Activated naive CD4-positive, alpha-beta T cell treated with anti-CD3 and anti-CD28 coated beads for 36 hours (primary cell): ENCODE measurements at regions of chr1 and their contacts with region 1.

Region 1: GRCh38 chr1:31938174-31938950 is at the start of gene PTP4A2:
- DNase-seq: peak; percentile 87
- H3K4me3 Mint-ChIP-seq: peak within 1 kb of the TSS; percentile 99
- H3K27ac Mint-ChIP-seq: peak within 1 kb of the TSS; percentile 99
- H3K4me1 Mint-ChIP-seq: peaks cover 68% of the 10 kb centered on the region
- H3K27me3 Mint-ChIP-seq: no peaks in the 10 kb centered on the region
- total RNA-seq, gene PTP4A2: 240 to 263 TPM

Region 2: GRCh38 chr1:30756545-30757195 is 1181.7 kb before region 1 on chr1:
- CTCF ChIA-PET with region 1: no interaction called
- intact Hi-C with region 1: loop called (anchors 5 kb)
- DNase-seq: peak; percentile 91
- H3K4me3 Mint-ChIP-seq: peak overlapping the region; percentile 98
- H3K27ac Mint-ChIP-seq: peak overlapping the region; percentile 100
- H3K4me1 Mint-ChIP-seq: peaks cover 76% of the 10 kb centered on the region
- H3K27me3 Mint-ChIP-seq: no peaks in the 10 kb centered on the region

Region 3: DNA sequence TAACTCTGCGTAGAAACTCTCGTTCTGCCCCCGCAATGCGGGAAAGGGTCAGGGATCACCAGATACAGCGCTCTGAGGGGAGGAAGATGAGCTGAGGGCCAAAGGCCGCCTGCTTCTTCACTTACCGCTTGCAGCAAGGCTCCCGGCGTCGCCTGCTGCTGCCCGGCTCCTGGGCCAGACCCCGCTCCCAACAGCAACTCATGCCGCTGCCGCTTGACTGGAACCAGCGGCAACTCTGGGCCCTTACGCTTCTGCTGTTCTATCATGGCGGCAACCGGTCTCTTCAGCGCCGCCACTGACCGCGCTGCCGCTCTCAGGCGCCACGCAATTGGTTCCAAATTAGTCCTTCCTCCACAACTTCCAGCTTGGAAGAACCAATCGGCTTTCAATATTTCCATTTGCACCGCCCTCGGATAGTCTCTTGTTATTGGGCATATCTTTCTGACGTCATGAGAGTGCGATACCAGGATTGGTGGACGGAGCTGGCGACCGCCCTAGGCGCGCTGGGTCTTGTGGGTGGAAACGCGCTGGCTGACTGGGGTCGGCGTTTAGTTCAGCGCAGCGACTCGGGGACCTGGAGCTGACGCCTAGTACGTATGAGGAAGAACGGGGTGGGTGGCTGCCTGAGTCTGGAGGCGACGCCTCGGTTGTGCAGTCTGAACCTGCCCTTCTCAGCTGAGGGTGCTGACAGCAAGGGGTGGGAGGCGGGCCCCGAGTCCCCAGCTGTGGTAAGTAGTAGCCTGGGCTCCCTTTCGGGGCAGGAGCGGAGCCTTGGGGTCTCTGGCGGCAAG is 641.7 kb before region 1 on chr1 and contains the starts of genes SNRNP40 and ZCCHC17:
- CTCF ChIA-PET with region 1: no interaction called
- intact Hi-C with region 1: loop called (anchors 10 kb)
- DNase-seq: peak; percentile 97
- H3K4me3 Mint-ChIP-seq: no peak within 1 kb of the TSS
- H3K27ac Mint-ChIP-seq: no peak within 1 kb of the TSS
- H3K4me1 Mint-ChIP-seq: peaks cover 36% of the 10 kb centered on the region
- H3K27me3 Mint-ChIP-seq: no peaks in the 10 kb centered on the region
- total RNA-seq, gene SNRNP40: 101 to 106 TPM
- total RNA-seq, gene ZCCHC17: 20.8 to 21.2 TPM

Region 4: DNA sequence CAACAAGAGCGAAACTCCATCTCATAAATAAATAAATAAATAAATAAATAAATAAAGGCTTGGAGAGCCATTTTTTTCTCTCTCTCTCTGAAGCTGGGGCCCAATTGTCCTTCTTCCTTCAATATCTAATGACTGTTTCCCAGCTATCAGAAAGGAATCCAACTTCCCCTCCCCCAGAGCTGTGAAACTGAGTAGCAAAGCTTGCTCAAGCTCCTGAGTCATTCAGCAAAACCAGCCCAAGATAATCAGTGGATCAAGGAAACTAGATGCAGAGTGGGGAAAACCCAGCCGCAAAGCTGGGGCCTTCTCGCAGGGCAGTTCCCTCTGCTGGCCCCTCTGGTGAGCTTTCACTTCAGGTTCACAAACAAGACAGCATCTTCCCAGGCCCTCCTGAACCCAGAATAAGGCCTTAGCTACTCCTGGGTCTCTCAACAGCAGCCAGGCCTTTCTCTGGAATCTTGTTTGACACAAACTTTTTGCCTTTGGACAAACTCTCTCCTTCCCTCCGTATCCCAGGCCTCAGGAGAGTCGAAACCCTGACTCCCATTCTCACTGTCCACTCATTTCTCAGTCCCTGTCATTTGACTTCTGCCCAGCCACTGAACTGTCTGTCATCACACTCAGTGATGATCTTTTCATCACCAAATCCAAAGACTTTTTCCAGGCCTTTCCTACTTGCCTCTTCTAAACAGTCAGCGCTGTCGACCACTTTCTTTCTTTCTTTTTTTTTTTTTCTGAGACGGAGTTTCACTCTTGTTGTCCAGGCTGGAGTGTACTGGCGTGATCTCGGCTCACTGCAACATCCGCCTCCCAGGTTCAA is 17.8 kb after region 1 on chr1:
- CTCF ChIA-PET with region 1: interaction called, 167 read pairs
- intact Hi-C with region 1: loop called (anchors 1 kb)
- DNase-seq: peak; percentile 95
- H3K4me3 Mint-ChIP-seq: peak overlapping the region; percentile 40
- H3K27ac Mint-ChIP-seq: peak overlapping the region; percentile 90
- H3K4me1 Mint-ChIP-seq: peaks cover 75% of the 10 kb centered on the region
- H3K27me3 Mint-ChIP-seq: no peaks in the 10 kb centered on the region

Region 5: DNA sequence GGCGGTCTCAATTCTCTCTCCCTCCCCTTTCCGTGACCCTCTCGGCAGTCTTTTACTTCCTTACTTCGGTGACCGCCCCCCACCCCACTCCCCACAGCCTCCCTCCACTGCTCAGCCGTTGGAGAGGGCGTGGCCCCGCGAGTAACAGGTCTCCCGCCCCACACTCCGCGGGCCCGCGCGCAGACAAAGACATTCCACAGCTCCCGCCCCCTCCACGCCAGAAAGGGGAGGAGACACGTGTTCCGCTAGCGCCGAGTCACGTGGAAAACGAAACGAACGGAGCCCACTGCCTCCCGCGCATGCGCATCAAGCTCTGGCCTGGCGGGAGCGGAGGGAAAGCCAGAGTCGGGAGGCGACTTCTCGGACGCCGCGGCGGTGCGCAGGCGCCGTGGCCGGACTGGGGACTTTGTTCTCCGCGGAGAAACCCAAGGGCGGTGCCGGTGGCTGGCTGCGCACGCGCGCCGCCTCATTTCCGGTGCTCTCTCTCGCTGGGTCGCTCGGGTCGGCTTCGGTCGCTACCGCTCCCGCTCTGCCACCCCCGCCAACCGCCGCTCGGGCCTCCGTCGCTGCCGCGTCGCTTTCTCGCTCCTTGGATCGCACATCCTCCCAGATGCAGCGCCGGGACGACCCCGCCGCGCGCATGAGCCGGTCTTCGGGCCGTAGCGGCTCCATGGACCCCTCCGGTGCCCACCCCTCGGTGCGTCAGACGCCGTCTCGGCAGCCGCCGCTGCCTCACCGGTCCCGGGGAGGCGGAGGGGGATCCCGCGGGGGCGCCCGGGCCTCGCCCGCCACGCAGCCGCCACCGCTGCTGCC is 75.2 kb after region 1 on chr1 and contains the start of gene KHDRBS1:
- CTCF ChIA-PET with region 1: interaction called, 5 read pairs
- intact Hi-C with region 1: loop called (anchors 2 kb)
- DNase-seq: peak; percentile 98
- H3K4me3 Mint-ChIP-seq: peak within 1 kb of the TSS; percentile 94
- H3K27ac Mint-ChIP-seq: peak within 1 kb of the TSS; percentile 94
- H3K4me1 Mint-ChIP-seq: peaks cover 33% of the 10 kb centered on the region
- H3K27me3 Mint-ChIP-seq: no peaks in the 10 kb centered on the region
- total RNA-seq, gene KHDRBS1: 189 to 198 TPM